ENCODE measurements at regions of chr12 and their contacts with region 1.

Region 1: GRCh38 chr12:51341259-51342007 is 5.0 kb downstream of the CELA1 start:
- DNase-seq: peak; percentile 56
- ATAC-seq: peak; percentile 85
- H3K4me3 ChIP-seq: peak overlapping the region in 1 of 2 experiments; percentile 24; a peak in 1 of 4 replicates
- H3K27ac ChIP-seq: no peak overlapping the region
- H3K4me1 ChIP-seq: peaks cover 0 to 17% of the 10 kb centered on the region in 2 experiments; a peak in 2 of 4 replicates
- H3K27me3 ChIP-seq: no peaks in the 10 kb centered on the region
- CTCF ChIP-seq: peak; percentile 94 to 99 (median 95)
- POLR2A ChIP-seq: no peak
- RAD21 ChIP-seq: peak; percentile 99

Region 2: DNA sequence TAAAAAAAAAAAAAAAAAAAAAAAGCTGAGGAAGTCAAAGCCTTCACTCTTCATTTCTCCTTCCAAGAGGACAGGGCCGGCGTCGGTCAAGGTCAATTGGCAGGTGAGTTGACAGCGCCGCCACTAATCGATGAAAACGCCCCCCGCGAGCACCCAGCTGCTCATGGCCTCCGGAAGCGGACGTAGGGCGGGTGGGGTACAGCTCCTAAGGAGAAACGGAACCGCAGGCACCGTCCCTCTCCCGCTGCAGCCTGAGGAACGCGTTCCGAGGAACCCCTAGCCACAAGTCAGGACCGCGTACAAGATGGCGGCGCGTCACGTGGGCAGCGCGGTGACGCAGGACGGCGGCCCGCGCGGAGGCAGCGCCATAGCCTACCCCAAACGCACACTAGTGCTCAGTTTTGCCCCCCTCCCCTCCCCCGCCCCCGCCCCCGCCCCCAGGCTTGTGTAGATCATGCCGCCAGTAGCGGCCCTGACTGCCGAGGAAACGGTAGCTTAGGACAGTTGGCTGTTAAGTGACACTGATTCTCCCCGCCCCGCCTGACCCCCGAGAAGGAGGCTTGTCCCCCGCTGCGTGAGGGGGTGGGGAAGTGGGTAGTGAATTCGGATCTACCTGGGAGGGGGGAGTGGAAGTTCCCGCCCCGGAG is 577.7 kb before region 1 on chr12 and contains the start of gene ATF1:
- CTCF ChIA-PET with region 1: interaction called, 15 read pairs
- POLR2A ChIA-PET with region 1: interaction called, 5 read pairs
- RAD21 ChIA-PET with region 1: interaction called in 1 of 2 experiments, 5 read pairs
- intact Hi-C with region 1: loop called (anchors 1 kb)
- DNase-seq: peak; percentile 79
- ATAC-seq: peak; percentile 83
- H3K4me3 ChIP-seq: peak within 1 kb of the TSS; percentile 88 to 89
- H3K27ac ChIP-seq: peak within 1 kb of the TSS; percentile 100
- H3K4me1 ChIP-seq: peaks cover 25 to 36% of the 10 kb centered on the region in 2 experiments
- H3K27me3 ChIP-seq: no peaks in the 10 kb centered on the region
- CTCF ChIP-seq: no peak
- POLR2A ChIP-seq: peak; percentile 60
- RAD21 ChIP-seq: no peak
- total RNA-seq, gene ATF1: 48.8 TPM

Region 3: GRCh38 chr12:51047655-51048540 is 293.5 kb before region 1 on chr12 and contains the start of gene LETMD1:
- CTCF ChIA-PET with region 1: no interaction called
- POLR2A ChIA-PET with region 1: no interaction called
- RAD21 ChIA-PET with region 1: no interaction called
- intact Hi-C with region 1: loop called (anchors 1 kb)
- DNase-seq: peak; percentile 99
- ATAC-seq: peak; percentile 99
- H3K4me3 ChIP-seq: peak within 1 kb of the TSS; percentile 71 to 88
- H3K27ac ChIP-seq: peak within 1 kb of the TSS; percentile 84
- H3K4me1 ChIP-seq: peaks cover 7 to 18% of the 10 kb centered on the region in 2 experiments; a peak in 2 of 4 replicates
- H3K27me3 ChIP-seq: no peaks in the 10 kb centered on the region
- CTCF ChIP-seq: peak; percentile 84 to 88 (median 87)
- POLR2A ChIP-seq: peak; percentile 75
- RAD21 ChIP-seq: peak; percentile 89
- total RNA-seq, gene LETMD1: 70.8 TPM

Region 4: DNA sequence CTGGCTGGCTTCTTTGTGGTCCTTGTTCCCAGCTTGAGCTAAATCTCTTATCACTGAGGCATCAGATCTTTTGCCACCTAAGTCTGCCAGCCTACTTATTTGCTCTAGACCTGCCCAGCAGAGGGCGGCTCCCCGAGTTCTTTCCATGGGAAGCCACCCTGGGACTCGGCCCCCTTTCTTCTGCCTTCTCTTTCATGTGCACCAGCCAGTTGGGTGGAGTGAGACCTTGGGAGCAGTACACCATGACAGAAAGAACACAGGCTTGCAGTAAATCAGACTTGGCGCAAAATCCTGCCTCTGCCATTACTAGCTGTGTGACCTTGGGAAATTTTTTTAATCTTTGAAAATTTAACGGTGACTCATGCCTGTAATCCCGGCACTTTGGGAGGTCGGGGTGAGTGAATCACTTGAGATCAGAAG is 78.7 kb before region 1 on chr12:
- CTCF ChIA-PET with region 1: interaction called, 23 read pairs
- POLR2A ChIA-PET with region 1: no interaction called
- RAD21 ChIA-PET with region 1: interaction called, 10 to 15 read pairs
- intact Hi-C with region 1: loop called (anchors 1 kb)
- DNase-seq: peak; percentile 84
- ATAC-seq: peak; percentile 96
- H3K4me3 ChIP-seq: peak overlapping the region; percentile 3 to 11; a peak in 2 of 4 replicates
- H3K27ac ChIP-seq: peak overlapping the region; percentile 49
- H3K4me1 ChIP-seq: peaks cover 17 to 24% of the 10 kb centered on the region in 2 experiments
- H3K27me3 ChIP-seq: no peaks in the 10 kb centered on the region
- CTCF ChIP-seq: peak; percentile 57 to 66 (median 64); a peak in 5 of 6 replicates
- POLR2A ChIP-seq: no peak
- RAD21 ChIP-seq: peak; percentile 66

Region 5: DNA sequence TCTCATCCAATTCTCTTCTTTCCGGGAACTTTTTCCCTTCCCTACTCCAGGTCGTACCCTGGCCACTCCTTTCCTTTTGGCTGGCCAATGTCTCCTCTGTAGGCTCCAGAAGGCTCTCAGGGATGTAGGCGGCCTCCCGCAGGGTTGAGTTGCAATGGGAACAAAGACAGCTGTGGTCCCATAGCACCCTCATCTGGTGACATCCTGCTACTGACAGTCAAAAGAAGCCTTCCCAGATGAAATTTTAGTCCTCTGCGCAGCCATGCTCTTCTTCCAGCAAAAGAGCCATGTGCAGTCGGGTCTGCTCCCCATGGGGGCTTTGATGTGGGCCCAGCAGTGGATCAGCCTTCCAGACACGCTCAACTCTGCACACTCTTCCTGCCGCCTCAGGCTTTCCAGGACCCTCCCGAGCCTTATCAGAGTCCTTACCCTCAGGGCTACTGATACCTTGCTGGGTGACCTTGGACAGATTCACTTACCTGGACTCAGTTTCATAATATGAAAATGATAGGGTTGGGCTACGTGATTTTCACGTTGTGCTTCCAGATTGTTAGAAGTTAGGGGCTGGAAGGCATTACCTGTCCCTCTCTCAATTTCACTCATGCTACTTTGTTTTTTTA is 10.6 kb after region 1 on chr12:
- CTCF ChIA-PET with region 1: interaction called, 18 read pairs
- POLR2A ChIA-PET with region 1: no interaction called
- RAD21 ChIA-PET with region 1: interaction called in 1 of 2 experiments, 6 read pairs
- intact Hi-C with region 1: no loop called
- DNase-seq: peak; percentile 27
- ATAC-seq: peak; percentile 85
- H3K4me3 ChIP-seq: no peak overlapping the region
- H3K27ac ChIP-seq: no peak overlapping the region
- H3K4me1 ChIP-seq: no peaks in the 10 kb centered on the region
- H3K27me3 ChIP-seq: no peaks in the 10 kb centered on the region
- CTCF ChIP-seq: peak; percentile 61 to 85 (median 83)
- POLR2A ChIP-seq: no peak
- RAD21 ChIP-seq: peak; percentile 87

Measured in HCT116 (cell line).